K562 (cell line): ENCODE measurements at regions of chr19 and their contacts with region 1.

Region 1: GRCh38 chr19:9584073-9584833 is at the start of gene ZNF121:
- DNase-seq: peak; percentile 85 to 94 (median 87)
- ATAC-seq: peak; percentile 93
- H3K4me3 ChIP-seq: peak within 1 kb of the TSS; percentile 86
- H3K27ac ChIP-seq: peak within 1 kb of the TSS; percentile 99
- H3K4me1 ChIP-seq: peaks cover 0 to 6% of the 10 kb centered on the region in 2 experiments; a peak in 3 of 5 replicates
- H3K27me3 ChIP-seq: peaks cover 4% of the 10 kb centered on the region in 2 experiments; a peak in 3 of 5 replicates
- CTCF ChIP-seq: no peak
- EP300 ChIP-seq: 0 out of 2 replicates have a peak, but pooled peaks have one; percentile 12
- POLR2A ChIP-seq: peak; percentile 96
- RAD21 ChIP-seq: no peak
- polyA plus RNA-seq, gene ZNF121: 14.6 to 26.2 TPM

Region 2: DNA sequence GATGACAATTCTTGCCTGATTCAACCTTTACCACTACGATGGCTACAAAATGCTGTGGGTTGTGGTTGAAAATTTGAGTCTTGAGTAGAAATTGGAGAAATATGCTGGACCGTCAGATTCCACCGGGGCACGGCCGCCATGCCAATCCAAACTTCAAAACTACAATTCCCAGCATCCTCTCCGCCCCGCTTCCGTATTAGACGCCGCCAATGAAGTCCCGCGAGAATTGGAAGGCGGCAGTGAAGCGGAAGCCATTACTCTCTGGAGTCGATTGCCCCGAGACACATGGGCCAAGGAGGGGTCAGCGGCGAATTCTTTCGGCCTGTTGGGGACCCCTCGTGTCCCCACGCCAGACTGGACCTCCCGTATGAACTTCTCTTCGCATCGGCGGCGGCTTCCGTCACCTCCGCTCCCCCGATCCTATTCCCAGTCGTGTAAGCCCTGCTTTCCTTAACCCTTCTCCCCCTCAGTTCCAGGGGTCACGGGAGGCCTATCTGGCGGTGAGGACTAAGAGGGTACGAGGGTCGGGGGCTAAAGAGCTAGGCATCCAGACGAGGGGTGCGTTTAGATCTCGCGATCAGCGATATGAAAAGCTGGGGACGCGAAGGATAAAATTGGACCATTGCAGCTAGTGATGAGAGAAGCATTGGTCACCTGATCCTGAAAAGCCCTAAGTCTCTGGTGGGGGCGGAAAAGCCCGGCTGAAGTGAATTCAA is 443.9 kb before region 1 on chr19 and contains the start of gene ZNF317:
- CTCF ChIA-PET with region 1: no interaction called
- POLR2A ChIA-PET with region 1: no interaction called
- in situ Hi-C with region 1: no loop called
- intact Hi-C with region 1: loop called (anchors 5 kb)
- DNase-seq: peak; percentile 81 to 96 (median 85)
- ATAC-seq: peak; percentile 97
- H3K4me3 ChIP-seq: peak within 1 kb of the TSS; percentile 61
- H3K27ac ChIP-seq: peak within 1 kb of the TSS; percentile 92
- H3K4me1 ChIP-seq: peaks cover 0 to 9% of the 10 kb centered on the region in 2 experiments; a peak in 2 of 5 replicates
- H3K27me3 ChIP-seq: no peaks in the 10 kb centered on the region
- CTCF ChIP-seq: no peak; a peak in 1 of 6 replicates
- EP300 ChIP-seq: no peak
- POLR2A ChIP-seq: peak; percentile 95
- RAD21 ChIP-seq: no peak
- polyA plus RNA-seq, gene ZNF317: 23.9 to 37.9 TPM

Region 3: GRCh38 chr19:9309139-9309973 is 274.9 kb before region 1 on chr19 and contains the start of gene ZNF699:
- CTCF ChIA-PET with region 1: no interaction called
- POLR2A ChIA-PET with region 1: no interaction called
- in situ Hi-C with region 1: no loop called
- intact Hi-C with region 1: loop called (anchors 5 kb)
- DNase-seq: peak; percentile 94 to 98 (median 94)
- ATAC-seq: peak; percentile 95
- H3K4me3 ChIP-seq: peak within 1 kb of the TSS; percentile 99
- H3K27ac ChIP-seq: peak within 1 kb of the TSS; percentile 84
- H3K4me1 ChIP-seq: peaks cover 3 to 6% of the 10 kb centered on the region in 2 experiments; a peak in 2 of 5 replicates
- H3K27me3 ChIP-seq: no peaks in the 10 kb centered on the region
- CTCF ChIP-seq: no peak
- EP300 ChIP-seq: no peak
- POLR2A ChIP-seq: peak; percentile 80
- RAD21 ChIP-seq: no peak
- polyA plus RNA-seq, gene ZNF699: 0.08 to 0.25 TPM